Sciatic nerve (tissue), 2 donors: ENCODE measurements at regions of chr15 and their contacts with region 1.

Region 1: DNA sequence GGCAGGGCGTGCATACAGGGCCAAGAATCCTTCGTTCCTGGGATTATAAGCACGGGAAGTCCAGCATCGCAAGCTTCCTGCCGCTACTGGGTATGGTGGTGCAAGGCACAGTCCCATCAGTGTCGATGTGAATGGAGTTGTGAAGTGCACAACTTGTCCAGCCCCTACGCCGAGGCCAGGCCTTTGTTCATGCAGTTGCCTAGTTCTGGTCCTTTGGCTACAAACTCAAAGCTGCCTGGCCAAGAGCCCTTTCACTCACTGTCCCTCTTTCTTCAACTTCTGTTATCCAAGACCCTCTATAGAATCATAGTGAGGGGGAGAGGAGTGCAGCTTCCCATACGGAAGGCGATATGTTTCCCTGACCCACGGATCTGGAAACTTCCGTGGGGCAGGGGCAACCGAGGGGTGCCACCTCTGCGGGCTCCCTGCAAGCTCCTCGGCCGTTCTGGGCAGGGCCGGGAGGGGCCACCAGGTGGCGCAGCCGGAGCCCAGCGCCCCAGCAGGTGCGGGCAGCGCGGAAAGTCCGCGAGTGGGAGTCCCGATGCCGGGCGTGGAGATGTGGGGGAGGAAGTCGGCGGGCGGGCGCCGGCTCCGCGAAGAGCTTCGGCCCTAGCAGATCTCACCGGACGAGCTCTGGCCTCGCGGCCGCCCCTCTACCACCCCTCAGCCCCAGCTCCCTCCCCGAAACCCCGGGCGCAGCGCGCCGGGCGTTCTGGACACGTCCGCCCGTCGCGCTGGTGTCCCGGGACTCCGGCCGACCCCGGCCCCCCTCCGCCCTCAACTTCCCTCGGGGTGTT is 693 bp downstream of the RASGRP1 start:
- DNase-seq: peak; percentile 78
- ATAC-seq: peak; percentile 84

Region 2: DNA sequence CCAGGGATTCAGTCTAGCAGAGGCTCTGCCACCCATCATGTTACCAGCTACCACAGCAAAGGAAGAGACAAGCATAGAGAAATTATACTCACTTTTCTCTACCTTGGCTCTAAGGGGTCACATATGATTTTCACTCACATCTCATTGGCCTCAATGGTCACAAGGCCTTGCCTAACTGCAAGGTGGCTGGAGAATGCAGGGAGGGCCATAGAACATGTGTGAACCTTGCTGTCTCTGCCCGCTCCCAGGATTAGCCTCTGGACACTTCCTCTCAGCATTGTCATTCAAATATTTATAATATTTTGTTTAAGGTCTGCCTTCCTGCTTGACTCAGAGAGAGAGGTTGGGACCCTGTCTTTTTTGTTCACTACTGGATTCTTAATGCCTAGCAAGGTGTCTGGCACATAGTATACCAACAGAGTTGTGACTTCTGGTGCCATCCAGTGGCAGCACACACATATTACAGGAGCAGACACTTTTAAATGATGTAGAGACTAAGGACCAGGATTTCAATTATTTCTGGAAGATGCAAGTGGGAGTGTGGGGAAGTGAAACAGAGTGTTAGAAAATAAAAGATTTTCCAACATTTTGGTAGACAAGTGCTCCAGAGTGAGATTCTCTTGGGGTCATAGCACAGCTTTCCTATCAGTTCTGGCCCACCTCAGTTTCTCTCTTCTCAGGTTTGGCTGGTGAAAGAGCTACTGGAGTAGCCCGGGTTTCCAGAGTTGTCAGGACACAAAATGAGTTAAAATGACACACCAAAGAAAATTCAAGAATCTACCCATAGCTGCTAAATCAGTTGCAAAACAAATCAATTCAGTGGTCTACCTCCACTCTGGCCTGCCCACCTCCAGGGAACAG is 119.7 kb after region 1 on chr15:
- intact Hi-C with region 1: loop called (anchors 10 kb)
- DNase-seq: no peak
- ATAC-seq: peak; percentile 71